Caco-2 (cell line): ENCODE measurements at regions of chr1 and their contacts with region 1.

Region 1: DNA sequence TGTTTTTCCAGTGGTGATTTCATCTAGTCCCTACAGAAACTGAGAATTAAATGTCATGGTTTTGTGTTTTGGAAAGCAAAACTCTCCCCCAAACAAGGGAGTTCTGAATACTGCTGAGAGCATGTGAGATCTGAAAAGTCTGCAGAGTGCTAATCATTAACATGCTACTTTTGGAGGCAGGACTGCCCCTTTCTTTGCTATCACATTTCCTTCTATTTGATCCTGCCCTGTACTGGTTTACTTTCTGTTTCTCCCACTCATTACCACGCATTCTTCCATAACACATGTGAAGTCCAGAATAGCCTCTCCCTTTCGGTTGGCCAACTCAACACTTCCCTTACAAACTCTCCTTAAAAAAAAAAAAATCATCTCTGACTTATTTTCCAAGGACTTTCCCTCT is 63.6 kb downstream of the GADD45A start:
- DNase-seq: peak; percentile 42 to 51
- H3K4me3 ChIP-seq: peak overlapping the region; percentile 9
- H3K4me3 Mint-ChIP-seq: peak overlapping the region; percentile 69
- H3K27ac Mint-ChIP-seq: peak overlapping the region; percentile 69
- H3K4me1 ChIP-seq: peaks cover 80% of the 10 kb centered on the region
- H3K4me1 Mint-ChIP-seq: peaks cover 30% of the 10 kb centered on the region
- H3K27me3 ChIP-seq: no peaks in the 10 kb centered on the region
- H3K27me3 Mint-ChIP-seq: no peaks in the 10 kb centered on the region
- CTCF ChIP-seq: no peak

Region 2: DNA sequence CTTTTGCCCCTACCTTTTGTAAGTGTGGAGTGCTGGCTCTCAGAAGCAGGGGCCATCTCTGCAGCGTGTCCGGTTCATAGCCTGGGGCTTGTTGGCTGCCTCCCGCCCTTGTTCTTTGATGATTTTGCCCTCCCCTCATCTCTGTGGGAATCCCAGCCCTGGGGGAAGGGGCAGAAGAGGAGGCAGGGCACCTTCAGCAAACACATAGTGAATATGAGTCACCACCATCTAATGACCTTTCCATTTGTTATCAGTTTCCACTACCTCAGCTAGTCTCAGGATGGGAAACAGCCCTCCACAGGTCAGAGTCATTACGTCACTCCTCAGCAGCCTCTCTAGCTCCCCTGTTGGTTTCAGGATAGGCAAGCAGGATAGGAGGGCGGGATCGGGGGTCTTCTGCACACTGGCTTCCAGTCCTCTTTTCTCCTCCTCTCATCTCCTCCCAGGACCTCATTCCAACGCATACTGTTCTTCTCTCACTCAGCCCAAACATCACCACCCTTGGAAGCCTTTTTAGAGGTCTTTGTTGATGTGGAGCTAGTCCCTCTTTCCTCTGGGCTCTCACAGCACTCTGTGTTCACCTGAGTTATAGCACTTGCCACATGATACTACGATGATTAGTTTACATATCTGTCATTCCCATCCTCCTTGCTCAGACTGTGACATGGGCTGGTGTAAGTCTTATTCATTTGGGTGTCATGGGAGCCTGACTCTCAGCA is 47.8 kb before region 1 on chr1:
- CTCF ChIA-PET with region 1: no interaction called
- POLR2A ChIA-PET with region 1: interaction called, 5 read pairs
- intact Hi-C with region 1: loop called (anchors 2 kb)
- DNase-seq: peak; percentile 85 to 90
- H3K4me3 ChIP-seq: no peak overlapping the region
- H3K4me3 Mint-ChIP-seq: peak overlapping the region; percentile 65
- H3K27ac Mint-ChIP-seq: peak overlapping the region; percentile 96
- H3K4me1 ChIP-seq: peaks cover 19% of the 10 kb centered on the region
- H3K4me1 Mint-ChIP-seq: peaks cover 15% of the 10 kb centered on the region
- H3K27me3 ChIP-seq: no peaks in the 10 kb centered on the region
- H3K27me3 Mint-ChIP-seq: no peaks in the 10 kb centered on the region
- CTCF ChIP-seq: peak; percentile 39 to 60

Region 3: DNA sequence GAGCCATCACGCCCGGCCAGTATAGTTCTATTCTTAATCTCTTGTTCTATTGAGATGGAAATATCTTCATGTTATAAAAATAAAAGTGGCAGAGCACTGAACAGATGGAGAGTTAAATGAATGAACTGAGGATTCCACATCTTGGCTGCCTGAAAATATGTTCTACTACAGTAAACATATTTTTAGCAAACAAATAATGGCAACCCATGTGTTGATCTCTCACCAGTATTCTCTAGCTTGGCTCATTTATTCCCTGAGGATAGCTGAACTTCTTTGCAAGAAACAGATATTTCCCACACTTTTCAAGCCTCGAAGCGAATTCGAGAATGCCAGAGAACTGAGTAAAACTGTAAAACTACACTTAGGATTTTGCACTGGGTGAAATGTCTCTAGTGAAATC is 242.9 kb after region 1 on chr1:
- CTCF ChIA-PET with region 1: no interaction called
- POLR2A ChIA-PET with region 1: no interaction called
- intact Hi-C with region 1: no loop called
- DNase-seq: no peak
- H3K4me3 ChIP-seq: no peak overlapping the region
- H3K4me3 Mint-ChIP-seq: no peak overlapping the region
- H3K27ac Mint-ChIP-seq: no peak overlapping the region
- H3K4me1 ChIP-seq: no peaks in the 10 kb centered on the region
- H3K4me1 Mint-ChIP-seq: no peaks in the 10 kb centered on the region
- H3K27me3 ChIP-seq: no peaks in the 10 kb centered on the region
- H3K27me3 Mint-ChIP-seq: no peaks in the 10 kb centered on the region
- CTCF ChIP-seq: no peak